ENCODE measurements at regions of chr6 and their contacts with region 1.

Region 1: DNA sequence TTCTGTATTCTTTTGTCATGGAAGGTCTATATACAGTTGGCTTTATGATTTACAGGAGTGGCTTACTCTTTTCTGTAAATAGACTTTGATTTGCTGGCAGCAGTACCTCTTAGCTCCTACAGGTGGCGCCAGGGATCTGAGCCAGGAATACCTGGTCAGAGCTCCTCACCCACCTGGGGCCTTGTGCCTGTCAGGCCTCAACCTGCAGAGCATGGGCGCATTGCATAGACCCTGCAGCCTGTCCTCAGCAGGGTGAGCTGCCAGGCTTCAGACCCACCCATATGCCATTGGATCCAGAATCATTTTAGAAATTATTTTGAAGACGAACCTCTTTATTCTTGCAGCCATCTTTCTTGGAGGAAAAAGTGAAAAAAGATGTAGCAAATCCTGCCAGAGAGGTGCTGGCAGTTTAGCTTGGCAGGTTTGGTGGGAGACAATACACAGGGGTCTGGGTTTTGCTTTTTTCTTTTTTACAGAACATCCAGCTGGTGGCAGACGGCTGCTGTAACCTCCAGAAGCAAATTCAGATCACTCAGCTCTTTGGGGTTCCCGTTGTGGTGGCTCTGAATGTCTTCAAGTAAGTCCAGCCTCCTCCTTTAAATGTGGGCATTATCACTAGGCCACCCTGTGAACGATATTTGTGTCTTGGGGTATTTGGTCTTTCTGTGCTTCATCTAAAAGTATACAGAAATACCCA is 149.1 kb downstream of the MTHFD1L start:
- DNase-seq: peak; percentile 75
- ATAC-seq: peak; percentile 78
- H3K4me3 ChIP-seq: no peak overlapping the region
- H3K27ac ChIP-seq: peak overlapping the region; percentile 78
- H3K4me1 ChIP-seq: peaks cover 70 to 75% of the 10 kb centered on the region in 2 experiments
- H3K27me3 ChIP-seq: no peaks in the 10 kb centered on the region
- CTCF ChIP-seq: peak; percentile 74 to 99 (median 98); a peak in 5 of 6 replicates
- POLR2A ChIP-seq: no peak
- RAD21 ChIP-seq: peak; percentile 99

Region 2: DNA sequence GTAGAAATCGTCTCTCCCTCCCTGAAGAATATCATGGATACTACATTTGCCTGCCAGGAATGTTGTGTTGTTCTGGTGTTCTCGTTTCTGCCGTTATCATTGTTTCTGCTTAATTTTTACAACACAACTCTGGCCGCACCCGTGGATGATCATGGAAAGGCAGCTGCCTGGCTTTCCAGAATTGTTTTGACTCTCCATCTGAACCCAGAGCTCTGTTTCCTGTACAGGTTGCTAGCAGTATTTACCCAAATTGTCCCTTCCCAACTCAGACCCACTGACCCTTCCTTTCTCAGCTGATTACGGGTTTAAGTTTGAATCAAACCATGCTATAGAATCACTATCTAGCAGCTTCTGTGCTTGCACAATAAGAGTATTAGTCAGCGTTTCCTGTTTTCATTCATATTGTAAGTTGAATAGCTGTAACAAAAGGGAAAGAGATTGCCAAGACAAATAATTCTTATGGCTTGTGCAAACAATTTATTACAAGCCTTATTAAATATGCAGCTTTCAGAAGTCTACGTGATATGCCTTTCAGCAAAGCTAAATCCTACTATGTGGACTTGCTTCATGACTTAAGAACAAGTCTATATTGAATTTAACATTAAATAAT is 10.0 kb before region 1 on chr6:
- CTCF ChIA-PET with region 1: interaction called, 20 read pairs
- POLR2A ChIA-PET with region 1: interaction called, 6 read pairs
- RAD21 ChIA-PET with region 1: interaction called in 1 of 2 experiments, 3 read pairs
- intact Hi-C with region 1: no loop called
- DNase-seq: no peak
- ATAC-seq: no peak
- H3K4me3 ChIP-seq: no peak overlapping the region
- H3K27ac ChIP-seq: peak overlapping the region; percentile 47
- H3K4me1 ChIP-seq: peaks cover 17 to 33% of the 10 kb centered on the region in 2 experiments; a peak in 3 of 4 replicates
- H3K27me3 ChIP-seq: no peaks in the 10 kb centered on the region
- CTCF ChIP-seq: no peak
- POLR2A ChIP-seq: no peak
- RAD21 ChIP-seq: no peak

Region 3: DNA sequence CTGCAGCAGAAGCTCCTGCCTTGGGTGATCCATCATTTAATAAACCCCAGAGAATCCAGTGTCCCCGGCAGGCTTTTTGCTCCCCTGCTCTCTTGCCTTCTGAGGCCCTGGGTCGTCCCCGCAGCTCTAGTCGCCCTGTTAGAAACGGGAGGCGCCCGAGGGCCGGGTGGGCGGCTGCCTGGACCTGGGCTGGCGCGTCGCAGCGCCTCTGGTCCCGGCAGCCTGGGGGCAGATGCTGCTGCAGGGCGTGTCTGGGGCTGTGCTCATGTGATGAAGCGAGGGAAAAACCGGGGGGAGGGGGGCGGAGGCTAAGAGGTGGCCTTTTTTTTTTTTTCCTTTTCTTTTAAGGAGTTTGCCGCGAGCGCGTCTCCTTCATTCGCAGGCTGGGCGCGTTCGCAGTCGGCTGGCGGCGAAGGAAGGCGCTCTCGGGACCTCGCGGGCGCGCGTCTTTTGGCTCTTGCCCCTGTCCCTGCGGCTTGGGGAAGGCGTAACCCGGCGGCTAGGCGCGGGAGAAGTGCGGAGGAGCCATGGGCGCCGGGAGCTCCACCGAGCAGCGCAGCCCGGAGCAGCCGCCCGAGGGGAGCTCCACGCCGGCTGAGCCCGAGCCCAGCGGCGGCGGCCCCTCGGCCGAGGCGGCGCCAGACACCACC is 225.6 kb after region 1 on chr6:
- CTCF ChIA-PET with region 1: no interaction called
- POLR2A ChIA-PET with region 1: interaction called, 3 read pairs
- RAD21 ChIA-PET with region 1: no interaction called
- intact Hi-C with region 1: loop called (anchors 2 kb)
- DNase-seq: peak; percentile 59
- ATAC-seq: peak; percentile 82
- H3K4me3 ChIP-seq: peak overlapping the region; percentile 66 to 72
- H3K27ac ChIP-seq: peak overlapping the region; percentile 75
- H3K4me1 ChIP-seq: peaks cover 6 to 40% of the 10 kb centered on the region in 2 experiments; a peak in 3 of 4 replicates
- H3K27me3 ChIP-seq: no peaks in the 10 kb centered on the region
- CTCF ChIP-seq: no peak
- POLR2A ChIP-seq: peak; percentile 66
- RAD21 ChIP-seq: no peak

Measured in HCT116 (cell line).